Ascending aorta (tissue), 2 donors: ENCODE measurements at regions of chr11 and their contacts with region 1.

Region 1: DNA sequence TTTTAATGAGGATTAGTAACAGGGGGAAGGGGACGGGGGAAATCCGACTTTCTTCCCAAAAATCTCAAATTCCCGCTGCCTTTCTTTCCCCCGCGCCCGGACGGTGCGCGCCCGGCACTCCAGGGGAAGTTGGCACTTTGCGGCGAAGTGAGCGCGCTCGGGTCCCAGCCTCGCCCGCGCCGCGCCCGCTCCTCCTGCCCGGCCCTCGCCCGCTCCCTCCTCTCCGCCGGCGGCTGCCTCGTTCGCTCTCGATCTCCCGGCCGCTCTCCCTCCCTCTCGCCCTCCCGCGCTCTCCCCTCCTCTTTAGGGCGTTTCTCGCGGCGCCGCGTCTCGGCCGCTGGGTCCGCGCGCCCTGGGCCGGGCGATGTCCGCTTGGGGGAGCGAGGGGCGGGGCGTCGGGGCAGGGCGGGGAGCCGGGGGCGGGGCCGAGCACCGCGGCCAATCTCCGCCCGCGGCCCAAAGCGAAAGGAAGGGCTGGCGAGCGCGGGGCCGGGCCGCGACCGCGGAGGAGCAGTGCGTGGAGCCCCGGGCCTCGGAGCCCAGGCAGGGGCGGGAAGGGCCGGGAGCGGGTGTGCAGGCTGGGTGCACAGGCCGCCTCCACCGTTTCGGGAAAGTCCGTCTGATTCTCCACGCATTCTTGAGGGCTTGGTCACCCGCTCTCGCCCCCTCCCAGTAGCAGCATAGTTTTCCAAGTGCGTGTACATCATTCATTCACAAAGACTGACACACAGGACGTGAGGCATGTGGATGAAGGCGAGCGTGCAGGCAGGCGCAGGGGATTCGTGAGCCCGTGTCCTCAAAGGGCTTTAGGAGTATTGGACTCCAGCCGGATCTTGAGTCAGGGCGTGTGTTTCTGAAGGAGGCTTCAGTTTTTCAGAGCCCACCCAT is 65.1 kb downstream of the ETS1 start:
- DNase-seq: peak; percentile 79 to 96
- H3K4me3 ChIP-seq: peak overlapping the region; percentile 84 to 86
- H3K27ac ChIP-seq: peak overlapping the region; percentile 96
- H3K4me1 ChIP-seq: peaks cover 9 to 38% of the 10 kb centered on the region in 2 donors
- H3K27me3 ChIP-seq: no peaks in the 10 kb centered on the region
- CTCF ChIP-seq: no peak

Region 2: GRCh38 chr11:128208329-128209137 is 313.8 kb before region 1 on chr11:
- intact Hi-C with region 1: loop called (anchors 5 kb)
- DNase-seq: peak in 1 of 2 donors; percentile 76
- H3K4me3 ChIP-seq: no peak overlapping the region
- H3K27ac ChIP-seq: peak overlapping the region; percentile 55 to 77
- H3K4me1 ChIP-seq: peaks cover 4 to 36% of the 10 kb centered on the region in 2 donors
- H3K27me3 ChIP-seq: no peaks in the 10 kb centered on the region
- CTCF ChIP-seq: no peak

Region 3: GRCh38 chr11:128448200-128448886 is 74.0 kb before region 1 on chr11:
- intact Hi-C with region 1: loop called (anchors 5 kb)
- DNase-seq: peak in 1 of 2 donors; percentile 69
- H3K4me3 ChIP-seq: no peak overlapping the region
- H3K27ac ChIP-seq: peak overlapping the region; percentile 54 to 69
- H3K4me1 ChIP-seq: peaks cover 10 to 22% of the 10 kb centered on the region in 2 donors
- H3K27me3 ChIP-seq: no peaks in the 10 kb centered on the region
- CTCF ChIP-seq: no peak

Region 4: DNA sequence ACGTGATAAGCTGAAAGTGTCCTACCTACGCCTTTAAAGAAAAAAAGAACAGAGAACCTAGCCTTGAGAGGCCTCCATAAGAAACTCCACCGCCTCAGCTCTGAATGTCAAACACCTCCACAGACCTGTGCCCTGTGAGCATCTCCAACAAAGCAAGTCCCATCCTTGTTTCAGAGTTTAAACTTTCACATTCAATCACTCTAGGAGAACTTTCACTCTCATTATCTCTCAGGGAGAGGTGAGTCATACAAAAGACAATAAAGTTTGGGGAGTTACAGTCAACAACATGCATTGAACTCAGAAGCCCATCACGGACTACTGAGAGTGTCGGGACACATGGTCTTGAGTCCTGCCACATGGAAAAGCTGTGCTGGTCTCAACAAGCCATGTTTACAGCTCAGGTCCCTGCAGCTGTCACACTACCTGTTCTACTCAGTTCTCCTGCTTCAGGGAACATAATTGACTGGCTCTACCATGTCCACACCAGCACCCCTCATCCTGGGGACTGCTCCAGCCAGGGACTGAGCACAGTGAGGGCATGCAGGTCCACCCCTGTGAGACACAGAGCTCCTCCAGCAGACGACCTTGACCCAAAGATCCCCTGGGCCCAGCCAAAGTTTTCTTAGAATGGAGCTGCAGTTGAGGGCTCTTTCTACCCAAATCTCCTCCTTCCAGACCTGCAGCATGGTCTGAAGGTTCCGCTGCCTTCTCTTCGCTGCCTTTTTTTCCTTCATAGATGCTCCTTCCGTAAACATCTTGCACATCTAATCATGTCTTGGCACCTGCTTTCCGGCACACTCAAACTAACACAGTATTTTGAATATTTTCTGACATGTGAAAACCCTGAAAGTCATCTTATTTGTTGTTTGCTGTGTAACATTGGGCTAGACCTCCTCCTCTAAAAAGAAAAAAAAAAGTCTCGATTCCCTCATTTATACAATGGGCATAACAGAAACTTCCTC is 49.9 kb before region 1 on chr11:
- intact Hi-C with region 1: loop called (anchors 1 kb)
- DNase-seq: no peak
- H3K4me3 ChIP-seq: no peak overlapping the region
- H3K27ac ChIP-seq: peak overlapping the region in 1 of 2 donors; percentile 18
- H3K4me1 ChIP-seq: peaks cover 6 to 20% of the 10 kb centered on the region in 2 donors
- H3K27me3 ChIP-seq: no peaks in the 10 kb centered on the region
- CTCF ChIP-seq: no peak

Region 5: DNA sequence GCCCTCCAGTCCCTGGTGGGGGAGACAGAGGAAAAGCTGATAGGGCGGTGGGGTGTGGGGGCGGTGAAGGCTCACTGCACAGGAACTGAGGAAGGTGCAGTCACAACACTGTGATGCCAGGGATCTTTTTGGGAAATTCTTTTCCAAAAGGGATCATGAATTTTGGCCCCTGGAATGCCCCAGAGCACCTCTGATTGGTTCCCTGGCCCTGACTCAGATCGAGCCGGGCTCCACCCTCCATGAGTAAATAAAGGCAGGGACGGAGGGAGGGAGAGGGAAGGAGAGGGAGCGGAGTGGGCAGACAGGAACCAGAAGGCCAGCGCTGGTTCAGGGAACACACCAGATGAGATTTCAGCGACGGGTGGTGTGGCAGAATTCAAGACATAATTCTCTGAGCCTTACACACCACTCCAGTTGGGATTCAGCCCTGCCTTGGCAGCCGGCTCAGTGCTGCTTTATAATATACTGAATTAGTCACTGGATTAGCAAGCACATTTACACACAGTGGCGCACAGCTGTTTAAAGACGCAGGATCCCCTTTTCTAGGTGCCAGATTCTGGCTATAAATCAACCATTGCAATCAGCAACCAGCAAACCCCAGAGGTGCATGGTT is 15.2 kb before region 1 on chr11:
- intact Hi-C with region 1: loop called (anchors 1 kb)
- DNase-seq: peak; percentile 83 to 96
- H3K4me3 ChIP-seq: peak overlapping the region; percentile 9 to 59
- H3K27ac ChIP-seq: peak overlapping the region; percentile 84 to 94
- H3K4me1 ChIP-seq: peaks cover 22 to 59% of the 10 kb centered on the region in 2 donors
- H3K27me3 ChIP-seq: no peaks in the 10 kb centered on the region
- CTCF ChIP-seq: no peak

Region 6: GRCh38 chr11:128548655-128549255 is 26.5 kb after region 1 on chr11:
- intact Hi-C with region 1: loop called (anchors 2 kb)
- DNase-seq: peak in 1 of 2 donors; percentile 70
- H3K4me3 ChIP-seq: peak overlapping the region; percentile 58 to 79
- H3K27ac ChIP-seq: peak overlapping the region; percentile 31 to 46
- H3K4me1 ChIP-seq: peaks cover 2 to 10% of the 10 kb centered on the region in 2 donors
- H3K27me3 ChIP-seq: no peaks in the 10 kb centered on the region
- CTCF ChIP-seq: no peak

Region 7: DNA sequence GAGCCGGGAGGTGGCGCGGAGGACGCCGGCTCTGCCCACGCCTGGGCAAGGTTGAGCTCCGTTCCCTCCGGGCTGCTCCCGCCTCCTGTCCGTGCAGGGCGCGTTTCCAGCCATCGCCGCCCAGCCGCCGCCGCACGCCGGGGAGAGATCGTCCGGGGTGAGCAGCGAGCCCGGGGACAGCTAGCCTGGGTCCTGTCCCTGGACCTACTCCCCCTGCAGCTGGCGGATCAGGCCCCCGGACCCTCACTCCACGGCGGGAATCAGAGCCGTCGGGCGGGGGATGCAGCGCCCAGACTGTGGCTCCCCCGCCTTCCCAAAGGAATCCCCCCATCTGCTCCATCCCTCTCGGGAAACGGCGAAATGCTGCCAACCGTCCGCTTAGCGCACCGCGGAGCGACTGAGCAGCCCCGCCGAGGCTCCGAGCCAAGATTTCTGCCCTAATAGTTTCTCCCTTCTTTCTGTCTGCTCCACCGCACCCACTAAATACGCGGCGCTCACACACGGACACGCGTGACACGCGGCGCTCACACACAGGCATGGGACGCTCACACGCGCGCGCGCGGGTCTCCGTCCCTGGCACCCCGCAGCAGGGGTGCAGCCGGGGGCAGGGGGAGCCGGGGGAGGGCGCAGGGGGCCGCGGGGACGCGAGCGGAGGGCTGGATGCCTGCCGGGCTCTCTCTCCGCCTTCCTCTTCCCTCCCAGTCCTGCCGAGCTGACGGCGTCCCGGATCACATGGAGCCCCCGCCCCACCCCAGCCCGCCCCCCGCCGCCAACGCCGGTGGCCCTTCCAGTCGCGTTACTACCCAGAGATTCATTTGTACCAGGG is 368.5 kb after region 1 on chr11 and contains the start of gene KCNJ5:
- intact Hi-C with region 1: loop called (anchors 10 kb)
- DNase-seq: no peak
- H3K4me3 ChIP-seq: peak within 1 kb of the TSS; percentile 76 to 77
- H3K27ac ChIP-seq: no peak within 1 kb of the TSS
- H3K4me1 ChIP-seq: peaks cover 8 to 9% of the 10 kb centered on the region in 2 donors
- H3K27me3 ChIP-seq: no peaks in the 10 kb centered on the region
- CTCF ChIP-seq: no peak
- total RNA-seq, gene KCNJ5: 0.53 TPM